ENCODE measurements at regions of chr21 and their contacts with region 1.

Region 1: GRCh38 chr21:34545079-34545884 is 33.3 kb upstream of the KCNE1 start:
- DNase-seq: peak; percentile 62
- ATAC-seq: peak; percentile 90
- H3K4me3 ChIP-seq: peak overlapping the region; percentile 41 to 67 (median 56)
- H3K27ac ChIP-seq: peak overlapping the region; percentile 70
- H3K4me1 ChIP-seq: peaks cover 28% of the 10 kb centered on the region
- H3K27me3 ChIP-seq: no peaks in the 10 kb centered on the region
- CTCF ChIP-seq: 0 out of 2 replicates have a peak, but pooled peaks have one; percentile 9
- EP300 ChIP-seq: 0 out of 4 replicates have a peak, but pooled peaks of 1 of the 2 experiments have one; percentile 21
- POLR2A ChIP-seq: peak in 1 of 2 experiments; percentile 40; a peak in 2 of 4 replicates
- RAD21 ChIP-seq: no peak

Region 2: GRCh38 chr21:34526618-34527290 is 18.5 kb before region 1 on chr21:
- CTCF ChIA-PET with region 1: no interaction called
- POLR2A ChIA-PET with region 1: interaction called, 120 read pairs
- in situ Hi-C with region 1: no loop called
- intact Hi-C with region 1: loop called (anchors 1 kb)
- DNase-seq: peak; percentile 96
- ATAC-seq: peak; percentile 69
- H3K4me3 ChIP-seq: peak overlapping the region; percentile 60 to 70 (median 65)
- H3K27ac ChIP-seq: peak overlapping the region; percentile 87
- H3K4me1 ChIP-seq: peaks cover 62% of the 10 kb centered on the region
- H3K27me3 ChIP-seq: no peaks in the 10 kb centered on the region
- CTCF ChIP-seq: no peak
- EP300 ChIP-seq: peak; percentile 27 to 79; a peak in 3 of 4 replicates
- POLR2A ChIP-seq: peak; percentile 56 to 97; a peak in 3 of 4 replicates
- RAD21 ChIP-seq: no peak

Region 3: GRCh38 chr21:34559089-34559631 is 13.9 kb after region 1 on chr21:
- CTCF ChIA-PET with region 1: no interaction called
- POLR2A ChIA-PET with region 1: no interaction called
- in situ Hi-C with region 1: no loop called
- intact Hi-C with region 1: no loop called
- DNase-seq: no peak
- ATAC-seq: no peak
- H3K4me3 ChIP-seq: no peak overlapping the region
- H3K27ac ChIP-seq: no peak overlapping the region
- H3K4me1 ChIP-seq: no peaks in the 10 kb centered on the region
- H3K27me3 ChIP-seq: no peaks in the 10 kb centered on the region
- CTCF ChIP-seq: no peak
- EP300 ChIP-seq: no peak
- POLR2A ChIP-seq: no peak
- RAD21 ChIP-seq: no peak

Region 4: DNA sequence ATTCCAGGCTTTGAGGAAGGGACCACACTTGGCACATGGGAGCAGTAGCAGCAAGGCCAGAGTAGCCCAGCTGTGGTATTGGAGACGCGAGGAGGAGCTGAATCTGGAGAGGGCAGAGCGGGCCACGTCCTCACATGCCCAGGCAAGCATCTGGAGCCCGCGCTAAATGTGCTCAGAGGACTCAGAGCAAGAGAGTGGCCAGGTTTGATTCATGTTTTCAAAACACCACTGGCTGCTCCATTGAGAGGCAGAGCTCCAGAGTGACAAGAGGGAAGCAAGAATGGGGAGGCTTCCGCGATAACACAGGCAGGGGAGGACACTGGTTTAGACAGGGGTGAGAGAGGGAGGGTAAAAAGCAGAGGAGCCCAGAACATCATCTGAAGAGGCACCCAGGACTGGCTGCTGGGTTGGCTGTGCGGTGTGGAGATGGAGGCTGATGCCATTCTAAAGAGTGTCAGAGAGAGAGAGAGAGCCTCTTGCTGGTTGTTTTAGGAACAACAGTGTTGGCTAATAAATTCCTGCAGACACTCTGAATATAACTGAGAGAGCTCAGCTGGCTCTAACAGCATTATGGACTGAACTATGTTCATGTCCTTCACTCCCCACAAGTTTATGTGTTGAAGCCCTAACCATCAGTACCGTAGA is 37.3 kb after region 1 on chr21:
- CTCF ChIA-PET with region 1: no interaction called
- POLR2A ChIA-PET with region 1: no interaction called
- in situ Hi-C with region 1: no loop called
- intact Hi-C with region 1: loop called (anchors 5 kb)
- DNase-seq: peak; percentile 37
- ATAC-seq: peak; percentile 99
- H3K4me3 ChIP-seq: no peak overlapping the region
- H3K27ac ChIP-seq: no peak overlapping the region
- H3K4me1 ChIP-seq: peaks cover 9% of the 10 kb centered on the region
- H3K27me3 ChIP-seq: no peaks in the 10 kb centered on the region
- CTCF ChIP-seq: peak; percentile 78
- EP300 ChIP-seq: no peak
- POLR2A ChIP-seq: no peak
- RAD21 ChIP-seq: peak; percentile 74

Measured in HepG2 (cell line).